CD4-positive, alpha-beta T cell (primary cell): ENCODE measurements at regions of chr6 and their contacts with region 1.

Region 1: GRCh38 chr6:127951172-127951917 is 50.5 kb upstream of the THEMIS start:
- DNase-seq: peak in 3 of 14 experiments; percentile 53 to 79 (median 59)
- ATAC-seq: peak; percentile 80
- H3K4me3 ChIP-seq: peak overlapping the region; percentile 13
- H3K4me3 Mint-ChIP-seq: peak overlapping the region; percentile 62
- H3K27ac ChIP-seq: peak overlapping the region; percentile 36 to 42
- H3K27ac Mint-ChIP-seq: peak overlapping the region; percentile 85
- H3K4me1 ChIP-seq: peaks cover 28% of the 10 kb centered on the region
- H3K4me1 Mint-ChIP-seq: peaks cover 69% of the 10 kb centered on the region
- H3K27me3 ChIP-seq: no peaks in the 10 kb centered on the region
- H3K27me3 Mint-ChIP-seq: no peaks in the 10 kb centered on the region
- CTCF ChIP-seq: no peak

Region 2: GRCh38 chr6:127900935-127901334 is 50.4 kb before region 1 on chr6 and contains the start of gene THEMIS:
- CTCF ChIA-PET with region 1: interaction called, 3 read pairs
- POLR2A ChIA-PET with region 1: interaction called, 21 read pairs
- intact Hi-C with region 1: loop called in 1 of 2 experiments (anchors 5 kb)
- DNase-seq: peak in 13 of 14 experiments; percentile 22 to 89 (median 44)
- ATAC-seq: peak; percentile 75
- H3K4me3 ChIP-seq: peak within 1 kb of the TSS; percentile 71
- H3K4me3 Mint-ChIP-seq: peak within 1 kb of the TSS; percentile 98
- H3K27ac ChIP-seq: peak within 1 kb of the TSS; percentile 48 to 61
- H3K27ac Mint-ChIP-seq: peak within 1 kb of the TSS; percentile 91
- H3K4me1 ChIP-seq: peaks cover 13% of the 10 kb centered on the region
- H3K4me1 Mint-ChIP-seq: peaks cover 72% of the 10 kb centered on the region
- H3K27me3 ChIP-seq: no peaks in the 10 kb centered on the region
- H3K27me3 Mint-ChIP-seq: no peaks in the 10 kb centered on the region
- CTCF ChIP-seq: no peak
- total RNA-seq, gene THEMIS: 25.0 to 25.3 TPM

Region 3: GRCh38 chr6:127907960-127908640 is 43.2 kb before region 1 on chr6:
- CTCF ChIA-PET with region 1: interaction called, 3 read pairs
- POLR2A ChIA-PET with region 1: interaction called, 10 read pairs
- intact Hi-C with region 1: loop called in 1 of 2 experiments (anchors 5 kb)
- DNase-seq: peak in 5 of 14 experiments; percentile 10 to 67 (median 53)
- ATAC-seq: peak; percentile 75
- H3K4me3 ChIP-seq: peak overlapping the region; percentile 62
- H3K4me3 Mint-ChIP-seq: peak overlapping the region; percentile 86
- H3K27ac ChIP-seq: peak overlapping the region in 1 of 2 donors; percentile 79
- H3K27ac Mint-ChIP-seq: peak overlapping the region; percentile 94
- H3K4me1 ChIP-seq: peaks cover 10% of the 10 kb centered on the region
- H3K4me1 Mint-ChIP-seq: peaks cover 71% of the 10 kb centered on the region
- H3K27me3 ChIP-seq: no peaks in the 10 kb centered on the region
- H3K27me3 Mint-ChIP-seq: no peaks in the 10 kb centered on the region
- CTCF ChIP-seq: no peak

Region 4: GRCh38 chr6:127971945-127972391 is 20.6 kb after region 1 on chr6:
- CTCF ChIA-PET with region 1: interaction called, 6 read pairs
- POLR2A ChIA-PET with region 1: interaction called, 31 read pairs
- intact Hi-C with region 1: loop called in 1 of 2 experiments (anchors 1 kb)
- DNase-seq: peak; percentile 22 to 91 (median 42)
- ATAC-seq: peak; percentile 88
- H3K4me3 ChIP-seq: peak overlapping the region; percentile 53
- H3K4me3 Mint-ChIP-seq: peak overlapping the region; percentile 90
- H3K27ac ChIP-seq: peak overlapping the region; percentile 67 to 84
- H3K27ac Mint-ChIP-seq: peak overlapping the region; percentile 97
- H3K4me1 ChIP-seq: peaks cover 17% of the 10 kb centered on the region
- H3K4me1 Mint-ChIP-seq: peaks cover 75% of the 10 kb centered on the region
- H3K27me3 ChIP-seq: no peaks in the 10 kb centered on the region
- H3K27me3 Mint-ChIP-seq: no peaks in the 10 kb centered on the region
- CTCF ChIP-seq: no peak

Region 5: DNA sequence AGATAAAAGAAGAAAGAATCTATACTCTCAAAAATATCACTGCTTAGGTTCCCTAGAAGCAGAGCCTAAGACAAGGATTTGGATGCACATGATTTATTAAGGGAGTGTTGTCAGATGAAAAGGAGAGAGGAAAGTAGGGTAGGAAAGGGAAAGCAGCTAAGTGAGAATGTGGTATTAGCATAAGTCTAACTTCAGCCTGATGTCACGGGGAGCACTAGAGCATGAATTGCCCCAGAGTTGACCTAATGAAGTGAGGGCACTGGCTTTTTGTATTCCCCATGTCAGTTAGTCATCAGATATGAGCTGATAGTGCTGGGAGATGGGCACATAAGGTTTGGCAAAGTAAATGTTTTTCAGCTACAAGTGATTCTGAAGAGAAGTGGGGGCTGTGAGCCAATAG is 78.5 kb after region 1 on chr6:
- CTCF ChIA-PET with region 1: no interaction called
- POLR2A ChIA-PET with region 1: no interaction called
- intact Hi-C with region 1: loop called in 1 of 2 experiments (anchors 5 kb)
- DNase-seq: no peak
- ATAC-seq: no peak
- H3K4me3 ChIP-seq: no peak overlapping the region
- H3K4me3 Mint-ChIP-seq: no peak overlapping the region
- H3K27ac ChIP-seq: no peak overlapping the region
- H3K27ac Mint-ChIP-seq: no peak overlapping the region
- H3K4me1 ChIP-seq: peaks cover 2% of the 10 kb centered on the region
- H3K4me1 Mint-ChIP-seq: peaks cover 30% of the 10 kb centered on the region
- H3K27me3 ChIP-seq: no peaks in the 10 kb centered on the region
- H3K27me3 Mint-ChIP-seq: no peaks in the 10 kb centered on the region
- CTCF ChIP-seq: no peak

Region 6: DNA sequence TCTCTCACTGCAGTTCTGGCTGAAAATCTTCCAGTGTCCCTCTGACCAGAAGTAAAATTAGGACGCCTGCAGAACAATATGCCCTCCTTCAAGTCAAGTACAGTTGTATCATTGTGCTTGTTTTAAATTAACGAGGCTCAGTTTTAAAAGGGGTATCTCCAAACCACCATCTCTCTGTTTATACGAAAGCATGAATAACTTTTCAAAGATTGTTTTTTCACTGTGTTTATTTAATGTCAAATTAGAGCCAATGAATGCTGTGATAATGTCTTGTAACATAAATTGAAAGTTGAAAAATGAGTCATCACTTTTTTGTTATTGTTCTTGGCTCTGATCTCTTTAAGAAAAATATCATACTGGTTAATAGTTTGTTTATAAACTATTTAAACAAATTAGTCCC is 180.2 kb after region 1 on chr6:
- CTCF ChIA-PET with region 1: no interaction called
- POLR2A ChIA-PET with region 1: no interaction called
- intact Hi-C with region 1: no loop called
- DNase-seq: no peak
- ATAC-seq: no peak
- H3K4me3 ChIP-seq: no peak overlapping the region
- H3K4me3 Mint-ChIP-seq: no peak overlapping the region
- H3K27ac ChIP-seq: no peak overlapping the region
- H3K27ac Mint-ChIP-seq: no peak overlapping the region
- H3K4me1 ChIP-seq: no peaks in the 10 kb centered on the region
- H3K4me1 Mint-ChIP-seq: no peaks in the 10 kb centered on the region
- H3K27me3 ChIP-seq: no peaks in the 10 kb centered on the region
- H3K27me3 Mint-ChIP-seq: no peaks in the 10 kb centered on the region
- CTCF ChIP-seq: no peak